GM10248 (cell line): ENCODE measurements at regions of chr16 and their contacts with region 1.

Region 1: DNA sequence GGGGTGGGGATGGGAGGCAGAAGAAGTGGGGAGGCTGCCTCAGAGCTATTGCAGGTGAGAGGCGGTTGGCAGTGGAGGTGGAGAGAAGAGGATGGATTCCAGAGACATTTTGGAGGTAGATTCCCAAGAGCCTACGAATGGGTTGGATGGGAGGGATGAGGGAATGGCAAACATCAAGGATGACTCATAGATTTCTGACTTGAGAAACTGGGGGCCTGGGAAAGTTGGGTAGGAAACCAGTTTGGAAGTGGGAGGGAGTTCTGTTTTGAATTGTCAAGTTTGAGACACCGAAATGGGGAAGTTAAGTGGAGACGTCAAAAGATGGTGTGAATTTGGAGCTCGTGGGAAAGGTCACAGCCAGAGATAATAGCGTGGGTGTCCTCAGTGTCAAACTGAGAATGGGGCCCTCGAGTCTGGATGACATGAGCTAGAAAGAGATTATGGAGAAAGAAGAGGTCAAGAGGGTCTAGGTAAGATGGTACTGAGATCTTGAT is 6.2 kb upstream of the CYLD start:
- DNase-seq: peak; percentile 70
- CTCF ChIP-seq: no peak

Region 2: GRCh38 chr16:50747207-50747956 is 11.7 kb after region 1 on chr16:
- CTCF ChIA-PET with region 1: interaction called, 26 read pairs
- POLR2A ChIA-PET with region 1: interaction called, 9 read pairs
- DNase-seq: peak; percentile 40
- CTCF ChIP-seq: peak; percentile 29